Activated T-helper 1 cell treated with anti-CD3 and anti-CD28 coated beads, Interleukin-12 subunit alpha, Interleukin-12 subunit beta, Interleukin-2, Interleukin-4 antibody, amounts not matched to agents 30 ng/mL and 10 ng/mL and 1 ng/mL, durations not matched to agents 14 hours and 24 hours and 36 hours (primary cell): ENCODE measurements at regions of chr2 and their contacts with region 1.

Region 1: GRCh38 chr2:42360890-42361727 is at the start of gene COX7A2L:
- DNase-seq: peak; percentile 92
- H3K4me3 Mint-ChIP-seq: peak within 1 kb of the TSS; percentile 94
- H3K27ac Mint-ChIP-seq: peak within 1 kb of the TSS; percentile 92
- H3K4me1 Mint-ChIP-seq: peaks cover 49% of the 10 kb centered on the region
- H3K27me3 Mint-ChIP-seq: no peaks in the 10 kb centered on the region
- total RNA-seq, gene COX7A2L: 83.3 and 84.7 TPM in 2 replicates

Region 2: DNA sequence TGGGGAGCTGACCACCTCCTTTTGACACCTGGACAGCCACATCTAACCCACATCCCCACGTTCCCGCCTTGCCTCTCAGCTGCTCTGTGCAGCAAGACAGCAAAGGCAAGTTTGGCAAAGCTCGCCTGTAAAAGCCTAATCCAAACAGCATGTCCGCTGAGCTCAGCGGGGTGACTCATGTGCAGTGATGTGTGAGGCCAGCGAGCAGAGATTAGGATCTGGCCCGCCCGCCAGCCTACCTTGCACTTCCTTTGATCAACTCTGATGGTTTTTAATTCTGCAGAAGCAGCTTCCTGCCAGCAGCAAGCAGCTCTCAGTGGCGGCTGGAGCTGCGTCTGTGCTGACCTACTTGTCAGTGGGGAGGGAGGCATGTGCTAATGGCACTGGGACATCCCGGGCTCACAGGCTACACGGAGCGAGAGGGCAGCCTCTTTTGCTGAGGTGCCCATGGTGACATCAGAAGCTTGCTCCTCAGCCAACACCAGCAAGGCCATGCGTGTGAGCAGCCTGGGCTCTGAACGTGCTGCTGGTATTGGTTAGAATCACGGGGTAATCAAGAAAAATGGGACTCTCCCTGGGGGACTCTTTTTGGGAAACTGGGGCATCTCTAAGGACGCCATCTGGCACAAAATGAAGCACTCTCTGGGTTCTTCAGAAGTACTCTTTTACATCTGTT is 228.0 kb before region 1 on chr2:
- intact Hi-C with region 1: loop called (anchors 1 kb)
- DNase-seq: peak; percentile 87
- H3K4me3 Mint-ChIP-seq: peak overlapping the region; percentile 67
- H3K27ac Mint-ChIP-seq: peak overlapping the region; percentile 95
- H3K4me1 Mint-ChIP-seq: peaks cover 90% of the 10 kb centered on the region
- H3K27me3 Mint-ChIP-seq: no peaks in the 10 kb centered on the region

Region 3: DNA sequence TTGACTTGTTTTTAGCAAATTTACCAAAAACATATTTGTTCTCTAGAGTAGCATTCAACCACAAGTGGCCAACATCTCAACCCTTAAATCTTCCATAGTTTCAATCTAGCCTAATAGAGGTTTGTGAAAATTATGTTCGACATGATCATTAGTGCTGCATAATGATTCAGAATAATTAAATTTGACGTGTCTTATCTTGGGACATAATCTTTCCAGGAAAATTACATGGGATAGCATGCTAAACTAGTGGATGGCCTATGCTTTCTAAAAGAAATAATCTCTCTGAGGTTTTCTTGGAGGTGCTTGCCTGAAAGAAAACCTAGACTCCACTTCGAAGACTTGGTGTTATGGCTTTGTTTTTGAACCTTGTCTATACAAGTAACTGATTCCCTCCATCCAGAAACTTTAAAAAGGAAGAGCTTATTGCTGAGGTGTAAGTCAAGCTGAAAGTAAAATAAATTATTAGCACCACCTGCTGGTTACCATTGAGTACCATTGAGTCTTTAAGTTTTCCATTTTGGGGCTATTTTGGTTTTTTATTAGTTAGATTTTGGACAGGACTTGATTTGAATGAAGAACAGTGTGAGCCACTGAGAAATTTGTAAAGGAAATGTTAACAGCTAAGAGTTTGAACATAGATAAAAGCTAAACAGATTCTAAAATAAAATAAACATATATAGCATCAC is 32.8 kb before region 1 on chr2:
- intact Hi-C with region 1: loop called (anchors 2 kb)
- DNase-seq: no peak
- H3K4me3 Mint-ChIP-seq: no peak overlapping the region
- H3K27ac Mint-ChIP-seq: peak overlapping the region; percentile 40
- H3K4me1 Mint-ChIP-seq: peaks cover 28% of the 10 kb centered on the region
- H3K27me3 Mint-ChIP-seq: no peaks in the 10 kb centered on the region

Region 4: DNA sequence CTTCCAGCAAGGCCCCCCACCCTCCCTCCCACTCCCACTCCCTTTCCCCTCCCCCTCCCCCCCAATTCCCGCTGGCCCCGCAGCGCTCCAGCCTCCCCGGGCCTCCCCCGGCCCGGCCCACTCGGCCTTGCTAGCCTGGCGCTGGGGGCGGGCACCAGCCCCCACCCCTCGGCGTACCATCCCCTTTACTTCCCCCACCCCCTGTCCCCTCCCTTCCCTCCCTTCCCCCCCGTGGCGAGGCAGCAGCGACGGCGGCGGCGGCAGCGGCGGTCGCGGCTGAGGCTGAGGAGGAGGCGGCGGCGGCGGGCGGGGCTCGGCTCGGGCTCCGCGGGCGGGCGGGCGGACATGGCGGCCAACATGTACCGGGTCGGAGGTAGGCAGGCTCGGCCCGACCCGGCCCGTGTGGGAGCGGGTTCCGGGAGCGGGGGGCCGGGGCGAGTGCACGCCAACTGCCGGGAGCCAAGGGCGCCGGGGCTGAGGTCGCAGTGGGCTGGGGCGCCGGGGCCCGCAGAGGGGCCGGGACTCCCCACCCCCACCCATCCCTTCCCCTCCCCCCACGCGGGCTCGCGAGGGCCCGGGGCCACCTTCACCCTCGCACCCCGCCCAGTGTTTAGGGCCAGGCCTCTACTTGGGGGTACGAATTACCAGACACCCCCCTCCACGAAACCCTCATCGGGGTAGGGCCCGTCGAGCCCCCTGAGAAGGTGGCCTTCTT is 207.4 kb after region 1 on chr2 and contains the start of gene MTA3:
- intact Hi-C with region 1: loop called (anchors 1 kb)
- DNase-seq: peak; percentile 54
- H3K4me3 Mint-ChIP-seq: peak within 1 kb of the TSS; percentile 92
- H3K27ac Mint-ChIP-seq: peak within 1 kb of the TSS; percentile 96
- H3K4me1 Mint-ChIP-seq: peaks cover 20% of the 10 kb centered on the region
- H3K27me3 Mint-ChIP-seq: peaks cover 3% of the 10 kb centered on the region
- total RNA-seq, gene MTA3: 29.4 and 31.1 TPM in 2 replicates

Region 5: GRCh38 chr2:42652086-42652485 is 291.0 kb after region 1 on chr2:
- intact Hi-C with region 1: no loop called
- DNase-seq: peak; percentile 8
- H3K4me3 Mint-ChIP-seq: peak overlapping the region; percentile 52
- H3K27ac Mint-ChIP-seq: no peak overlapping the region
- H3K4me1 Mint-ChIP-seq: peaks cover 46% of the 10 kb centered on the region
- H3K27me3 Mint-ChIP-seq: no peaks in the 10 kb centered on the region

Region 6: GRCh38 chr2:43773876-43774613 is 1412.9 kb after region 1 on chr2 and contains the start of gene DYNC2LI1:
- intact Hi-C with region 1: loop called (anchors 10 kb)
- DNase-seq: peak; percentile 71
- H3K4me3 Mint-ChIP-seq: peak within 1 kb of the TSS; percentile 92
- H3K27ac Mint-ChIP-seq: peak within 1 kb of the TSS; percentile 79
- H3K4me1 Mint-ChIP-seq: peaks cover 19% of the 10 kb centered on the region
- H3K27me3 Mint-ChIP-seq: peaks cover 3% of the 10 kb centered on the region
- total RNA-seq, gene DYNC2LI1: 6.2 and 6.6 TPM in 2 replicates

Region 7: GRCh38 chr2:44361330-44362206 is 2000.5 kb after region 1 on chr2 and contains the starts of genes CAMKMT and PREPL:
- intact Hi-C with region 1: loop called (anchors 5 kb)
- DNase-seq: peak; percentile 97
- H3K4me3 Mint-ChIP-seq: peak within 1 kb of the TSS; percentile 99
- H3K27ac Mint-ChIP-seq: peak within 1 kb of the TSS; percentile 100
- H3K4me1 Mint-ChIP-seq: peaks cover 46% of the 10 kb centered on the region
- H3K27me3 Mint-ChIP-seq: no peaks in the 10 kb centered on the region
- total RNA-seq, gene CAMKMT: 13.4 and 14.2 TPM in 2 replicates
- total RNA-seq, gene PREPL: 29.4 and 30.5 TPM in 2 replicates